Gastrocnemius medialis (tissue), 4 donors: ENCODE measurements at regions of chr4 and their contacts with region 1.

Region 1: DNA sequence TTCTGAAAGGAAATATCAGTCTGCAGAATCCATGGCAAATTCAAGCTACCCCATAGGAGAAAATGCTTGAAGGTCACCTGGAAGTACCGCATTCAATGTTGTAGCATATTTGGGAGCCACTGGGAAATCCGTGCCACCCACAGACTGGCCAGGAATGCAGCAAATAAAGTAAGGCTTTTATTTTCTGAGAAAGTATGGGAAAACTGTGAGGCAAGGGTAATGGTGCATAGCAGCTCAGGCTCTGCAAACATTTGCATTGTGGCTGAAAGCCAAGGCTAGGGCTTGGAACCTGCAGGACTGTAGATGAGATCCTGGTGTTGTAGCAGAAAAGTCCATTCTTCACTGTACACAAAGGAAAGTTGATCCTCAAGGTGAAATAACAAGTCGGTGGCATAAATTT is 450.9 kb upstream of the NR3C2 start:
- DNase-seq: no peak
- ATAC-seq: no peak
- H3K4me3 ChIP-seq: no peak overlapping the region
- H3K27ac ChIP-seq: no peak overlapping the region
- H3K4me1 ChIP-seq: no peaks in the 10 kb centered on the region
- H3K27me3 ChIP-seq: no peaks in the 10 kb centered on the region
- CTCF ChIP-seq: no peak
- POLR2A ChIP-seq: no peak

Region 2: GRCh38 chr4:148618856-148619255 is 274.2 kb before region 1 on chr4:
- in situ Hi-C with region 1: no loop called
- intact Hi-C with region 1: loop called (anchors 5 kb)
- DNase-seq: no peak
- ATAC-seq: no peak
- H3K4me3 ChIP-seq: no peak overlapping the region
- H3K27ac ChIP-seq: no peak overlapping the region
- H3K4me1 ChIP-seq: no peaks in the 10 kb centered on the region
- H3K27me3 ChIP-seq: no peaks in the 10 kb centered on the region
- CTCF ChIP-seq: no peak
- POLR2A ChIP-seq: no peak

Region 3: DNA sequence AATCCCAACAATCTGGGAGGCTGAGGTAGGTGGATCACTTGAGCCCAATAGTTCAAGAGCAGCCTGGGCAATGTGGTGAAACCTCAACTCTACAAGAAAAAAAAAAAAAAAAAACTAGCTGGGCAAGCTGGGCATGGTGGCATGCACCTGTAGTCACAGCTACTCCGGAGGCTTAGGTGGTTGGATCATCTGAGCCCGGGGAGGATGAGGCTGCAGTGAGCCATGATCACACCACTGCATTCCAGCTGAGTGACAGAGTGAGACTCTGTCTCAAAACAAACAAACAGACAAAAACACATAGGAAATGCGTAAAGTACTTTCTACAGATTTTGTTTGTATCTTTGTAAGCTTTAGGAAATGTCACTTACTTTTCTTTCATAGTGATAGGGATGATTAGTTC is 143.7 kb before region 1 on chr4:
- in situ Hi-C with region 1: no loop called
- intact Hi-C with region 1: no loop called
- DNase-seq: no peak
- ATAC-seq: no peak
- H3K4me3 ChIP-seq: no peak overlapping the region
- H3K27ac ChIP-seq: no peak overlapping the region
- H3K4me1 ChIP-seq: no peaks in the 10 kb centered on the region
- H3K27me3 ChIP-seq: no peaks in the 10 kb centered on the region
- CTCF ChIP-seq: no peak
- POLR2A ChIP-seq: no peak

Region 4: GRCh38 chr4:148944136-148944838 is 51.2 kb after region 1 on chr4:
- in situ Hi-C with region 1: no loop called
- intact Hi-C with region 1: no loop called
- DNase-seq: no peak
- ATAC-seq: no peak
- H3K4me3 ChIP-seq: no peak overlapping the region
- H3K27ac ChIP-seq: no peak overlapping the region
- H3K4me1 ChIP-seq: no peaks in the 10 kb centered on the region
- H3K27me3 ChIP-seq: no peaks in the 10 kb centered on the region
- CTCF ChIP-seq: no peak
- POLR2A ChIP-seq: no peak

Region 5: GRCh38 chr4:148986951-148987350 is 93.9 kb after region 1 on chr4:
- in situ Hi-C with region 1: no loop called
- intact Hi-C with region 1: no loop called
- DNase-seq: no peak
- ATAC-seq: no peak
- H3K4me3 ChIP-seq: no peak overlapping the region
- H3K27ac ChIP-seq: no peak overlapping the region
- H3K4me1 ChIP-seq: no peaks in the 10 kb centered on the region
- H3K27me3 ChIP-seq: no peaks in the 10 kb centered on the region
- CTCF ChIP-seq: no peak
- POLR2A ChIP-seq: no peak

Region 6: DNA sequence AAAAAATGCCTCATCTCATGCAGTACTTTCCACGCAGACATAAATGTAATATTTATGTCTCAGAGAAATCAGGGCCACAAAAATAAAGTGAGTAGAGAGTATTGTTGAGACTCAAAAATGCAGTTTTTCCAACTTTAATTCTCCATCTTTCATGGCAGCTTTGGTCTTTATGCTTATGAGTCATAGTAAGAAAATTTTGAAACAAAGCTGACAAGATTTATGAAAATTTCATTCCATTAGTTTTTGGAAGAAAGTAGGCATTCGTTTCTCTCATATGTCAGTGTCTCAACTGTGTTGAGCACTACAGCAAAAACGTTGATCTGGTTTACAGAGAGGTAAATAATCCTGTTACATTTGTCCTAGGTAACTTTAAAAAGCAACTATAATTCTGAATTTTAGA is 265.7 kb after region 1 on chr4:
- in situ Hi-C with region 1: no loop called
- intact Hi-C with region 1: no loop called
- DNase-seq: no peak
- ATAC-seq: no peak
- H3K4me3 ChIP-seq: no peak overlapping the region
- H3K27ac ChIP-seq: no peak overlapping the region
- H3K4me1 ChIP-seq: no peaks in the 10 kb centered on the region
- H3K27me3 ChIP-seq: no peaks in the 10 kb centered on the region
- CTCF ChIP-seq: no peak
- POLR2A ChIP-seq: no peak